ENCODE measurements at regions of chr10 and their contacts with region 1.

Region 1: DNA sequence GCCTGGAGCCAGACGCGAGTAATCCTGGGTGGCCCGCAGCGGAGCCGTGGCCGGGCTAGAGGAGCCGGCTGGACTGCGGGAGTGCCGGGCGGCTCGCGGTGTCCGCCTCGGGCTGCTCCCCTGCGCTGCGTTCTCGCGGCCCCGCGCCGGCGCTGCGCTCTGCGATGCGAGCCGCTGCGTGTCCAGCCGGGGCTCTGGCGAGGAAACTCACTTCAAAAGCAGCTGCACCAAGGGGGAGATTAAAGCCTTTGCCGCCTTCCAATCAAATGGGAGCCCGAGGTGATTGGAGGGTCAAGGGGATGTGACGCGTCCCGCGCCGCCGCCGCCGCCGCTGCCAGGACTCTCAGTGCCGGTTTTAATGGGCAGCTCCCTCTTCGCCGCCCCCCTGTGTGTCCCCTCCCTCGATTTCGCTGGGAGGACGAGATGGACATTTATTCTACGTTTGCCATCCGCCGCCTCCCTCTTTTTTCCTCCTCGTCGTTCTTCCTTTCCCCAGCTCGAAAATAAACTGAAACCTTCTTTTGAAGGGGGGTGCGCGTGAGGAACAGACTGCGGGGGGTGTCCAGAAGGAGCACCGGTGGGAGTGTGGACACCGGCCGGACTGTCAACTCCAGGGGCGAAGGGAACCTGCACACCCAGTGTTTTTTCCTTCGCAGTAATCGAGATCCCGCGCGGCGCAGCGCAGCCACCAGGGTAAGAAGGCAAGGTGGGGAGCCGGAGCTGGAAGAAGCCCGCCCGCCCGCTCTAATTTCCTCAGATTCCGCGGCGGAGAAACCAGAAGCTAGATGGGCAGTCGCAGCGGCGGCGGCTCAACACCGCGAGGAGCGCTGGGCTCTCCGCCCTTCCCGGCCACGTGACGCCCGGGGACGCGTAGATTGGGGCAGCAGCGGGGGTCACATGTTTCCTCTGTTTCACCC is at the start of gene ZNF503:
- DNase-seq: peak; percentile 96 to 99 (median 98)
- H3K4me3 ChIP-seq: peak within 1 kb of the TSS; percentile 72 to 99 (median 85)
- H3K27ac ChIP-seq: peak within 1 kb of the TSS; percentile 92 to 99 (median 95)
- H3K4me1 ChIP-seq: peaks cover 0 to 24% of the 10 kb centered on the region in 2 donors
- H3K27me3 ChIP-seq: no peaks in the 10 kb centered on the region
- CTCF ChIP-seq: peak in 5 of 6 experiments; percentile 16 to 61 (median 53)
- POLR2A ChIP-seq: peak; percentile 96
- total RNA-seq, gene ZNF503: 5.4 to 129 (median 60.1) TPM

Region 2: GRCh38 chr10:75276411-75276872 is 125.4 kb before region 1 on chr10:
- intact Hi-C with region 1: no loop called
- DNase-seq: no peak
- H3K4me3 ChIP-seq: no peak overlapping the region
- H3K27ac ChIP-seq: no peak overlapping the region
- H3K4me1 ChIP-seq: peaks cover 0 to 4% of the 10 kb centered on the region in 2 donors
- H3K27me3 ChIP-seq: no peaks in the 10 kb centered on the region
- CTCF ChIP-seq: no peak
- POLR2A ChIP-seq: no peak

Region 3: DNA sequence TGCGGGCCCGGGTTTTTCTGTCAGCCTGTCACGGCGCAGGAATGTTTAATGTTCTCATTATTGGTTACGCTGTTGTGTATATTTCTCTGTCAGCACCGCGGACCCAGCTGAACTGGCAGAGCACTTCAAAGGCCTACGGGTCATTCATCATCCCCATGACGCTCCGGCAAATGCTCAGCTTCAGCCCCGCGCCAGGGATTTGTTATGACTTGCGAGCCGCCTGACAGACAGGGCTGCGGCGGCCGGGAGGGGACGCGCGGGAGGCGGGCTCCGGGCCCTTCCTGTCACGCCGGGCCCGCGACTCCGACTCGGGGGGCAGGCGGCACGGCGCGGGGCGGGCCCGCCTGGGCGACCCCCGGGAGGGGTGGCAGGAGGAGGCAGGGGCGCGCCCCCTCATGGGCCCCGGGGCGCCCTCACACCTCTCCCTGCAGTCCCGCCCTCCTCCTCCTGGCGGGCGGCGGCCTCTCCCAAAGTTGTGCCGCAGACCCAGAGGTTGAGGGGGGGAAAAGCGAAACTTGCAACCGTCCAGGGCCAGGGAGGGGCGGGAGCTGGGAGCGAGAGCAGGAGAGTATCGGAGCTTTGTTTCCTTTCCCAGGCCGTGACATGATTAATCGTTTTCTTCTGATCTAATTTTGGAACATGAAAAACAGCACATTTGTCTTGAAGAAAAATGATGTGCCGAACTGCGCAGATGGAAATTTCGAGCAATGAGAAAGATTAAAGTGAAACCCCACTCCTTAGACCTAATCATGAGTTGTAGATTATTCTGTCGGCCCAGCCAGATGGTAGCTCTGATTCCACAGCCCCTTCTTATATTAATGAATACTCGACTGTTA is 106.7 kb before region 1 on chr10:
- intact Hi-C with region 1: loop called in 1 of 2 experiments (anchors 5 kb)
- DNase-seq: peak; percentile 85 to 96 (median 93)
- H3K4me3 ChIP-seq: peak overlapping the region in 3 of 4 donors; percentile 27 to 66 (median 41)
- H3K27ac ChIP-seq: peak overlapping the region in 4 of 5 donors; percentile 83 to 97 (median 87)
- H3K4me1 ChIP-seq: peaks cover 8 to 33% of the 10 kb centered on the region in 2 donors
- H3K27me3 ChIP-seq: no peaks in the 10 kb centered on the region
- CTCF ChIP-seq: peak in 4 of 6 experiments; percentile 37 to 59 (median 43)
- POLR2A ChIP-seq: peak in 1 of 2 donors; percentile 84

Region 4: GRCh38 chr10:75497997-75498883 is 96.4 kb after region 1 on chr10:
- intact Hi-C with region 1: loop called in 1 of 2 experiments (anchors 10 kb)
- DNase-seq: peak; percentile 85 to 94 (median 92)
- H3K4me3 ChIP-seq: no peak overlapping the region
- H3K27ac ChIP-seq: peak overlapping the region; percentile 27 to 82 (median 65)
- H3K4me1 ChIP-seq: peaks cover 14 to 33% of the 10 kb centered on the region in 2 donors
- H3K27me3 ChIP-seq: no peaks in the 10 kb centered on the region
- CTCF ChIP-seq: no peak
- POLR2A ChIP-seq: peak in 1 of 2 donors; percentile 34

Region 5: GRCh38 chr10:75910032-75910431 is 508.2 kb after region 1 on chr10:
- intact Hi-C with region 1: loop called in 1 of 2 experiments (anchors 5 kb)
- DNase-seq: peak in 1 of 7 donors; percentile 11
- H3K4me3 ChIP-seq: no peak overlapping the region
- H3K27ac ChIP-seq: no peak overlapping the region
- H3K4me1 ChIP-seq: no peaks in the 10 kb centered on the region
- H3K27me3 ChIP-seq: no peaks in the 10 kb centered on the region
- CTCF ChIP-seq: peak; percentile 28 to 65 (median 52)
- POLR2A ChIP-seq: no peak

Region 6: GRCh38 chr10:76036111-76036940 is 634.5 kb after region 1 on chr10:
- intact Hi-C with region 1: loop called (anchors 5 kb)
- DNase-seq: peak; percentile 73 to 91 (median 84)
- H3K4me3 ChIP-seq: peak overlapping the region in 1 of 4 donors; percentile 31
- H3K27ac ChIP-seq: peak overlapping the region in 2 of 5 donors; percentile 42 to 70
- H3K4me1 ChIP-seq: peaks cover 0 to 18% of the 10 kb centered on the region in 2 donors
- H3K27me3 ChIP-seq: no peaks in the 10 kb centered on the region
- CTCF ChIP-seq: peak; percentile 89 to 97 (median 92)
- POLR2A ChIP-seq: no peak

Region 7: GRCh38 chr10:76547352-76547972 is 1145.6 kb after region 1 on chr10:
- intact Hi-C with region 1: loop called in 1 of 2 experiments (anchors 10 kb)
- DNase-seq: peak; percentile 81 to 94 (median 88)
- H3K4me3 ChIP-seq: no peak overlapping the region
- H3K27ac ChIP-seq: no peak overlapping the region
- H3K4me1 ChIP-seq: no peaks in the 10 kb centered on the region
- H3K27me3 ChIP-seq: no peaks in the 10 kb centered on the region
- CTCF ChIP-seq: peak; percentile 76 to 92 (median 83)
- POLR2A ChIP-seq: no peak